ENCODE measurements at regions of chr1 and their contacts with region 1.

Region 1: GRCh38 chr1:226144045-226144444 is 42.5 kb downstream of the ACBD3 start:
- DNase-seq: no peak
- ATAC-seq: no peak
- H3K4me3 ChIP-seq: no peak overlapping the region
- H3K4me3 Mint-ChIP-seq: no peak overlapping the region
- H3K27ac ChIP-seq: no peak overlapping the region
- H3K27ac Mint-ChIP-seq: no peak overlapping the region
- H3K4me1 ChIP-seq: no peaks in the 10 kb centered on the region
- H3K4me1 Mint-ChIP-seq: no peaks in the 10 kb centered on the region
- H3K27me3 ChIP-seq: no peaks in the 10 kb centered on the region
- H3K27me3 Mint-ChIP-seq: no peaks in the 10 kb centered on the region
- CTCF ChIP-seq: no peak

Region 2: DNA sequence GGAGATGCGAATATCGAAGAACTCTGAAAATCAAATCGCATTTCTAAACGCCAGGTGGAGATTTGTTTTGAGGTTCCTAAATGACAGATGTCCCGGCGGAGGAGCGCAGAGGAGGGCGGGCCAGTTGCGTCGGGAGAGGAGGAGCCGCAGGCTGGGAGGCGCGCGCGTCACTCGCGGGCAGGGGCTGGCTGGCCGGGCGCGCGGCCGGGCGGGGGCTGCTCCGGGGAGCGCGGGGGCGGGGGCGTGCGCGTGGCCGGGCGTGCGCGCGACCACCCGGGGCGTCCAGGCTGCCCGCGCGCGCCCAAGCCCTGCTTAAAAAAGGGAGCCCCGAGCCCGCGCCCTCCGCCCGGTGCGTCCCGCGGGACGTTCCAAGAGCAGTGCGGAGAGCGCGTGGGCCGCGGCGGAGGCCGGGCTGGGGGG is 34.2 kb before region 1 on chr1:
- CTCF ChIA-PET with region 1: no interaction called
- POLR2A ChIA-PET with region 1: no interaction called
- intact Hi-C with region 1: loop called in 1 of 2 experiments (anchors 1 kb)
- DNase-seq: peak; percentile 50 to 90 (median 64)
- ATAC-seq: peak; percentile 85
- H3K4me3 ChIP-seq: peak overlapping the region; percentile 58
- H3K4me3 Mint-ChIP-seq: peak overlapping the region; percentile 92
- H3K27ac ChIP-seq: peak overlapping the region; percentile 29 to 53
- H3K27ac Mint-ChIP-seq: peak overlapping the region; percentile 70
- H3K4me1 ChIP-seq: peaks cover 18% of the 10 kb centered on the region
- H3K4me1 Mint-ChIP-seq: peaks cover 9% of the 10 kb centered on the region
- H3K27me3 ChIP-seq: no peaks in the 10 kb centered on the region
- H3K27me3 Mint-ChIP-seq: no peaks in the 10 kb centered on the region
- CTCF ChIP-seq: no peak

Measured in CD4-positive, alpha-beta T cell (primary cell).